A549 (cell line): ENCODE measurements at regions of chr2 and their contacts with region 1.

Region 1: DNA sequence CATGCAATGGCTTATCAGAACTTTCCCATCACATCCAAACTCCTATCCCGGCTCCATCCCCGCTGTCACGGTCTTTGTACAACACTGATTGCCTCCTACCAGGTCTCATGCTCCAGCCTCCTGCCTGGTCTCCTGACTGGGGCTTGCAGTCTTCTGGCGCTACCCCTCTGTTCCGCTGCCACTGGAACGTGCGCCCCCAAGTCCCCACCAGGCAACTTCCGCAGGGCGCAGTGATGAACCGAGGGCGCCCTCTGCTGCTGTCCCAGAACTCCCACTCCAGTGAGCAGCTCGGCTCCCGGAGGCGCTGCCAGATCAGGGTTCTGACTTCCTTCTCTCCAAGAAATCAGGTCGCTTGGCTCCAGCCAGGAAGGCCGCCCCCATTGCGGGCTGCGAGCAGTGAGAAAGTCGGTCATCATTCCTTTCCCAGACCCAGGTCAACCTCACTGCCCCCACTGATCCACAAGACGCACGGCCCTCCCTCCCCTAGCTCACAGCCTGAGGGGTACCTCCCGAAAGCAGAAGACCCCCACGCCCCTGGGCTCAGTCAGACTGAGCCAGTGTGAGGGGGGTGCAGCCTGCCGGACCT is 43.9 kb upstream of the RAB11FIP5 start:
- DNase-seq: peak; percentile 58 to 69
- ATAC-seq: peak; percentile 96 to 98
- H3K4me3 ChIP-seq: 0 out of 3 replicates have a peak overlapping the region, but pooled peaks have one; percentile 5
- H3K27ac ChIP-seq: peak overlapping the region in 1 of 2 experiments; percentile 65; a peak in 2 of 6 replicates
- H3K4me1 ChIP-seq: peaks cover 4% of the 10 kb centered on the region; the same call in 1 of the 3 replicates
- CTCF ChIP-seq: peak; percentile 93
- EP300 ChIP-seq: no peak
- POLR2A ChIP-seq: no peak
- RAD21 ChIP-seq: peak; percentile 96 to 97

Region 2: GRCh38 chr2:72993147-72993932 is 163.3 kb before region 1 on chr2:
- CTCF ChIA-PET with region 1: interaction called, 96 read pairs
- POLR2A ChIA-PET with region 1: no interaction called
- DNase-seq: peak; percentile 42 to 89
- ATAC-seq: peak; percentile 33 to 79; a peak in 4 of 6 replicates
- H3K4me3 ChIP-seq: no peak overlapping the region
- H3K27ac ChIP-seq: no peak overlapping the region
- H3K4me1 ChIP-seq: no peaks in the 10 kb centered on the region
- CTCF ChIP-seq: peak; percentile 90
- EP300 ChIP-seq: no peak
- POLR2A ChIP-seq: no peak
- RAD21 ChIP-seq: peak; percentile 63 to 77

Region 3: GRCh38 chr2:73091164-73091563 is 65.5 kb before region 1 on chr2:
- CTCF ChIA-PET with region 1: interaction called, 500 read pairs
- POLR2A ChIA-PET with region 1: interaction called, 3 read pairs
- DNase-seq: no peak
- ATAC-seq: no peak
- H3K4me3 ChIP-seq: no peak overlapping the region
- H3K27ac ChIP-seq: no peak overlapping the region
- H3K4me1 ChIP-seq: peaks cover 18% of the 10 kb centered on the region
- CTCF ChIP-seq: no peak
- EP300 ChIP-seq: no peak
- POLR2A ChIP-seq: no peak
- RAD21 ChIP-seq: no peak

Region 4: DNA sequence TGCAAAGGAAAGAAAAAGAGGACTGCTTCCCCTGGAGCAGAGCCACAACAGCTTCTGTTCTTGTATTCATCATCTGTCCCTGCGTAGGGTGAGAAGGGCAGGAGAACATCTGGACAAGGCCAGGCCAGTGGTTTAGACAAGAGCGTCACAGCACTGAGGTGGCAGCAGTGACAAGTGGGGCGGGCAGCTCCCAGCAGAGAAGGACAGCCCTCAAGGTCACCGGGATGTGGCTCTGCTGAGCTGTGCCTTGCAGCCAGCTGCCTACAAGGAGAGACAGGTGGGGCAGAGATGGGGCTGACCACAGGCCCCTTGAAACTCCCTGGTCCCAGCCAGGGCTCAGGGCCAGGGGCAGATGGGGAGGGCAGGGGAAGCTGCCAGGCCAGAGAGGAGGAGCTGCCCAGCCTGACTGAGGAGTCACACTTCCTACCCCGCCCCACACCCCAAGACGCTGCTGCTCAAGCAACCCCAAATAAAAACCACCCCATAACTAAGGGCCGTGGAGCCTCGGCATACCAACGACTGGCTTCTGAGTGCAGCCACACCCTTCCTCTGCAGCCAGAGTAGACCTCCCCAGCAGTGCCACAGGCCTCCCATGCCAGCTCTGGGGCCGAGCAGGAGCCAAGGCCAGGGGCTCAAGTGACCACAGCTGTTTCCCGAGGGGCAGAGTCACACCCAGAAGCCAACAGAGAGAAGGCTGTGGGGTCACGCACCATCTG is 49.3 kb before region 1 on chr2:
- CTCF ChIA-PET with region 1: interaction called, 27 read pairs
- POLR2A ChIA-PET with region 1: no interaction called
- DNase-seq: no peak
- ATAC-seq: no peak
- H3K4me3 ChIP-seq: no peak overlapping the region
- H3K27ac ChIP-seq: no peak overlapping the region
- H3K4me1 ChIP-seq: peaks cover 14% of the 10 kb centered on the region
- CTCF ChIP-seq: no peak
- EP300 ChIP-seq: no peak
- POLR2A ChIP-seq: no peak
- RAD21 ChIP-seq: no peak

Region 5: DNA sequence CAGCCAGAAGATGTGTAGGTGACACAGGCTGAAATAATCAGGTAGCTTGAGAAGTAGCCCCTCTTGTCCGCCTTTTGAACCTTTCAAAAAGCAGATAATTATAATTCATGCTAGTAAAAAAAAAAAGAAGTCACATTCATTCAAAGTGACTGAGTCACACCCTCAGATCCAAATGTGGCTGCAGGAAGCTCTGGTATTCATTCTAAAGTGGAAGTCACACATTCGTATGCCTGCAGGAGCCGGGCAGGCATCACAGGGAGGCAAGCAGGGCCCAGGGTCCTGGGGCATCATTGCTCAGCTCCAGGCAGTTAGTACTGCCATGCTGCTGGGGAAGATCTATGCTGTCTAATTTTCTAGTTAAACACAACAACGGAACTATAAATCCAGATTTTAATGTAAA is 22.2 kb before region 1 on chr2:
- CTCF ChIA-PET with region 1: interaction called, 10 read pairs
- POLR2A ChIA-PET with region 1: no interaction called
- DNase-seq: no peak
- ATAC-seq: no peak; a peak in 1 of 6 replicates
- H3K4me3 ChIP-seq: no peak overlapping the region
- H3K27ac ChIP-seq: no peak overlapping the region
- H3K4me1 ChIP-seq: no peaks in the 10 kb centered on the region
- CTCF ChIP-seq: no peak
- EP300 ChIP-seq: no peak
- POLR2A ChIP-seq: no peak
- RAD21 ChIP-seq: no peak